Stomach (tissue), 19 donors: ENCODE measurements at regions of chr20 and their contacts with region 1.

Region 1: GRCh38 chr20:47620808-47621805 is 119.4 kb downstream of the NCOA3 start:
- DNase-seq: peak in 1 of 2 donors; percentile 83
- H3K4me3 ChIP-seq: no peak overlapping the region
- H3K27ac ChIP-seq: no peak overlapping the region
- H3K4me1 ChIP-seq: peaks cover 0 to 16% (median 0%) of the 10 kb centered on the region in 4 donors
- H3K27me3 ChIP-seq: no peaks in the 10 kb centered on the region
- CTCF ChIP-seq: peak in 5 of 7 experiments; percentile 50 to 88 (median 76)
- EP300 ChIP-seq: no peak
- POLR2A ChIP-seq: no peak

Region 2: DNA sequence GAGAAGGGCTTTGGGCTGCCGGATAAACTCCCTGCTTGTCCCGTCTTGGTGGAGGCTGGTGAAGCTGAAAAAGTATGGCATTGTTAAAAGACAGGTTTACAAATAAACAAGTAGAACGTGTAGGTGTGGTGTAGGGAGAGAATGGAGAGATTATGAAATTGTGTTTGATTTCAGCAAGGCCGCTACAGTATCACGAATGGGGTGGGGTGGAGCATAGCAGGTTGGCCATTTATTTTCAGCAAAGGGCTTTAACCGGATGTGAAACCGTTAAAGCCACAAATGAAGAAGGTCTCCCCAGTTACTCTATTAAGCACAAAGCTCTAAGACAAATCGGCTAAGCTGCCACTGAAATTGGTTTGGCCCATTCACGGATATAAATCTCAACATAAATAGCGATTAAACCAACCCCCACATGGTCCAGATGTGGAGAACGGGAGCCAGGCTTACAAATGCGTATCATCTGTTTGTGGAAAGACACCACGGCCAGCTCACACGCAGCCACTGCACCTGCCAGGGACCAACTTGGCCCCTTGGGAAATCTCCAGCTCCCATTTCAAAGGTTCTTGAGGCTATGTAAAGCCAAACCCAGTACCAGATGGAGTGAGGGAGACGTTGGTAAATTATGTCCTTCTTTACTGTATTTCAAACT is 358.6 kb before region 1 on chr20:
- intact Hi-C with region 1: loop called (anchors 10 kb)
- DNase-seq: no peak
- H3K4me3 ChIP-seq: no peak overlapping the region
- H3K27ac ChIP-seq: peak overlapping the region in 3 of 5 donors; percentile 18 to 52 (median 44)
- H3K4me1 ChIP-seq: peaks cover 16 to 47% (median 30%) of the 10 kb centered on the region in 4 donors
- H3K27me3 ChIP-seq: no peaks in the 10 kb centered on the region
- CTCF ChIP-seq: no peak
- EP300 ChIP-seq: no peak
- POLR2A ChIP-seq: no peak

Region 3: GRCh38 chr20:47392015-47392720 is 228.9 kb before region 1 on chr20:
- intact Hi-C with region 1: loop called (anchors 10 kb)
- DNase-seq: peak in 1 of 2 donors; percentile 31
- H3K4me3 ChIP-seq: no peak overlapping the region
- H3K27ac ChIP-seq: peak overlapping the region in 3 of 5 donors; percentile 10 to 66 (median 63)
- H3K4me1 ChIP-seq: peaks cover 0 to under 1% (median 0%) of the 10 kb centered on the region in 4 donors
- H3K27me3 ChIP-seq: no peaks in the 10 kb centered on the region
- CTCF ChIP-seq: no peak
- EP300 ChIP-seq: no peak
- POLR2A ChIP-seq: no peak

Region 4: DNA sequence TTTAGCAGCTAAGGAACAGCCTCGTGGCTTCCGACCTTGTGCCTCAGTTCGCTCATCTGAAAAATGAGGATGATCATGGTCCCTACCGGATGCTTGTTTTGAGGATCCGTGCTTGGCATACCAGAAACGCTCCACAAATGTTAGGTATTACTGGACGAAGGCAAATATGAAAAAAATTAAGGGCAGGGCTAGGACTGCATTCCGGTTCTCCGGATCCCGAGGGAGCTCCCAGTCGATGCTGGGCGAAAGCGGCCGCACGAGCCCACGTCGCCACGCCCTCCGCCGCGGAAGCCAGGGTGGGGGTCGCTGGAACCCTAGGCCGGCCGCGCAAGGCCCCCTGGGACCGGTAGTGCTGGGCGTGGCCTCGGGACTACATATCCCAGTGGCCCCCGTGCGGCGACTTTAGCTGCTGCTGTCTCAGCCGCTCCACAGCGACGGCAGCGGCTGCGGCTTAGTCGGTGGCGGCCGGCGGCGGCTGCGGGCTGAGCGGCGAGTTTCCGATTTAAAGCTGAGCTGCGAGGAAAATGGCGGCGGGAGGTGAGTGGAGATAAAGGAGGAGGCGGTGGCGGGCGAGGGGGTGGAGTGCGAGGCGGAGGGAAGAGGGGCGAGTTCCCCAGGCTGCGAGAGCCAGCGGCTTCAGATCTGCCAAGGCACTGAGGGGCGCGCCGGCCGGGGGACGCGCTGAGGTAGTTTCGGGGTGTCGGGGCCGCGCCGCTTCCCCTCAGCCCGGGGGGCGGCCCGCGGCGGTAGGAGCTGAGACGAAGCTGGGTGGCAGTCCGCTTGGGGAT is 119.4 kb before region 1 on chr20 and contains the start of gene NCOA3:
- intact Hi-C with region 1: no loop called
- DNase-seq: peak; percentile 95 to 98
- H3K4me3 ChIP-seq: peak within 1 kb of the TSS; percentile 71 to 97 (median 92)
- H3K27ac ChIP-seq: peak within 1 kb of the TSS; percentile 91 to 98 (median 96)
- H3K4me1 ChIP-seq: peaks cover 7 to 50% (median 33%) of the 10 kb centered on the region in 4 donors
- H3K27me3 ChIP-seq: no peaks in the 10 kb centered on the region
- CTCF ChIP-seq: peak in 5 of 7 experiments; percentile 52 to 79 (median 71)
- EP300 ChIP-seq: no peak
- POLR2A ChIP-seq: peak in 2 of 4 donors; percentile 83 to 89
- total RNA-seq, gene NCOA3: 8.7 to 60.8 (median 27.7) TPM